Activated T-helper 1 cell treated with anti-CD3 and anti-CD28 coated beads, Interleukin-12 subunit alpha, Interleukin-12 subunit beta, Interleukin-2, Interleukin-4 antibody, amounts not matched to agents 30 ng/mL and 10 ng/mL and 1 ng/mL, durations not matched to agents 14 hours and 24 hours and 36 hours (primary cell): ENCODE measurements at regions of chr2 and their contacts with region 1.

Region 1: DNA sequence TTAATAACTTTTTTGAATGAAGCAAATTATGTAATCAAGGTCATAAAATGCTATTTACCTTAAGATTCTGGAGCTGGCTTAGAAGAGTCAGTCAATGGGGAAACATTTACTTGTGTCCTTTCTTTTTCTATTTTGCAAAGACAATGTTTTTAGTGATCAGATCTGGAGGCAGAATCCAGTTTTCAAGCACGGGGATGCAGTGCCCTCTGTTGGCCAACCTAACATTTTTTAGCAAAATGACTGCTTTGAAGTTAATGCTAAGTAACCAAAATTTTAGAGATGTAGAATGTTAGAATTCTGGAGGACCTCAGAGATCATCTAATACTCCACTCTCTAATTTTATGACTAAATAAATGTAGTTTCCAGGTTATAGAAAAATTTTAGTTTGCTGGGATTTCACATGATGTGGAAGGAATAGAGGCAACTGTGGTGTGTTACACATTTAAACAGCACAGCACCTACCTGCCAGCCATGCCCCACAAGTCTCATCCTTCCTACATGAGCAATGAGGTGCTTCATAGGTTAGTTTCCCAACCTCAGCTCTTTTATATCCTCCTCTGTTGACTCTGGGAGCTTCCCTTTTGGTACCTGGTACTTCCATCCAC is 23.6 kb upstream of the SLC9A4 start:
- DNase-seq: peak; percentile 54
- H3K4me3 Mint-ChIP-seq: no peak overlapping the region
- H3K27ac Mint-ChIP-seq: no peak overlapping the region
- H3K4me1 Mint-ChIP-seq: peaks cover 20% of the 10 kb centered on the region
- H3K27me3 Mint-ChIP-seq: no peaks in the 10 kb centered on the region

Region 2: DNA sequence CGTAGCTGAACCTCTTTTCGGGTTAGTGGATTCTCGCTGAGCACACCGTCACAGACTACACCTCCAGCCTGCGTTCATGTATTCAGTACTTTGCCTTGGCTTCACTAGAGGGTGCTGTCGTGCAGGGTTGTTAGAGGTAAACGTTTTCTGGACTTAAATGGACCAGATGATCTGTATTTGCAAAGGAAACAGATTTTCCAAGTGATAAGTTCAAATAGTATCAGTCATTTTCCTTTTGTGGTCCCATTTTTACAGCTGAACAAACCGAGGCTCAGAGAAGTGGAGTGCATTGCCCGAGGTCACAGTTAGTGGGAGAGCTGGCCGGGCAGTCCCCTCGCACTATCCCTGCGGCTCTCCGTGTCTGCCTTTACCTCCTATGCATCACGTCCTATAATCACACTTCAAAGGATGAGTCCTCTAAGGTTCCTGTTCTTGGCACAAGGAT is 626.1 kb before region 1 on chr2:
- intact Hi-C with region 1: loop called (anchors 5 kb)
- DNase-seq: peak; percentile 63
- H3K4me3 Mint-ChIP-seq: peak overlapping the region; percentile 32
- H3K27ac Mint-ChIP-seq: peak overlapping the region; percentile 30
- H3K4me1 Mint-ChIP-seq: peaks cover 75% of the 10 kb centered on the region
- H3K27me3 Mint-ChIP-seq: no peaks in the 10 kb centered on the region

Region 3: GRCh38 chr2:102187496-102188150 is 261.8 kb before region 1 on chr2:
- intact Hi-C with region 1: loop called (anchors 2 kb)
- DNase-seq: no peak
- H3K4me3 Mint-ChIP-seq: peak overlapping the region; percentile 73
- H3K27ac Mint-ChIP-seq: peak overlapping the region; percentile 63
- H3K4me1 Mint-ChIP-seq: peaks cover 17% of the 10 kb centered on the region
- H3K27me3 Mint-ChIP-seq: peaks cover 23% of the 10 kb centered on the region

Region 4: GRCh38 chr2:102235491-102235890 is 214.0 kb before region 1 on chr2:
- intact Hi-C with region 1: loop called (anchors 1 kb)
- DNase-seq: no peak
- H3K4me3 Mint-ChIP-seq: no peak overlapping the region
- H3K27ac Mint-ChIP-seq: no peak overlapping the region
- H3K4me1 Mint-ChIP-seq: peaks cover 53% of the 10 kb centered on the region
- H3K27me3 Mint-ChIP-seq: no peaks in the 10 kb centered on the region

Region 5: DNA sequence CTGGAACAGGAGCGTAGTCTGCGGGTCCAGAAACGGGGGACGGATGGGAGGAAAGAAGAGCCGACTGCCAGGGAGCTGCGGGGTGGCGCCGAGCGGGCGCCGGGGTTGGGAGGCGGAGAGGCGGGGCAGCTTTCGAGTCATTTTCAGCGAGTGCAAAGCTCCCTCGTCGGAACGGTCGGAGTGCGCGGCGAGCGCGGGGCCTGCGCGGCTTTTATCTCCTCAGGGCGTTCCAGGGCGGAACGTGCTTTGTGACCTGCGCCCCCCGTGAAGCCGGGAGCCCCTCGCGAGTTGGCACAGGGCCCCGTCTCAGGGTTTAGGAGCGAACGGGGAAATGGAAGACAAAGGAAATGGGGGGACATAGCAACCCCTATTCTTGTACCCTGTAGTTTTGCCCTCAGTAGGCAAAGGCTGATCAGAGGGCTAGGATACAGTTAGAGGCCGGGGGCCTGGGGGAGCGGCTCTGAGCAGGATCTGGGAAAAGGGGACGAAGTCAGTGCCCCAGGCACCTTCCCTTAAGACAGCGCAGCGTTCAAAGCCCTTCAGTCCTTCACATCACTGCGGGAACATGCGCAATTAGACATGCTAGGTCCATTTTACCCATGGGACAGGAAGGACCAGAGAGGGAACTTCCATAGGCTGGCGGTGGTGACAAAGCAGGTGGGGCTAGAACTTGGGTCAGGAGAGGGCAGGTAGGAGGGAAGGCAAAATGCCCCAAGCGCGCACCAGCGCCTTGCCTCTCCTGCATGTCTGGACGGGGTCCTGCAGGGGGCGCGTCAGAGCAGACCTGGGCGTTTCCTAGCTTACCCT is 198.2 kb before region 1 on chr2:
- intact Hi-C with region 1: loop called (anchors 1 kb)
- DNase-seq: peak; percentile 49
- H3K4me3 Mint-ChIP-seq: peak overlapping the region; percentile 72
- H3K27ac Mint-ChIP-seq: peak overlapping the region; percentile 71
- H3K4me1 Mint-ChIP-seq: peaks cover 44% of the 10 kb centered on the region
- H3K27me3 Mint-ChIP-seq: peaks cover 4% of the 10 kb centered on the region

Region 6: DNA sequence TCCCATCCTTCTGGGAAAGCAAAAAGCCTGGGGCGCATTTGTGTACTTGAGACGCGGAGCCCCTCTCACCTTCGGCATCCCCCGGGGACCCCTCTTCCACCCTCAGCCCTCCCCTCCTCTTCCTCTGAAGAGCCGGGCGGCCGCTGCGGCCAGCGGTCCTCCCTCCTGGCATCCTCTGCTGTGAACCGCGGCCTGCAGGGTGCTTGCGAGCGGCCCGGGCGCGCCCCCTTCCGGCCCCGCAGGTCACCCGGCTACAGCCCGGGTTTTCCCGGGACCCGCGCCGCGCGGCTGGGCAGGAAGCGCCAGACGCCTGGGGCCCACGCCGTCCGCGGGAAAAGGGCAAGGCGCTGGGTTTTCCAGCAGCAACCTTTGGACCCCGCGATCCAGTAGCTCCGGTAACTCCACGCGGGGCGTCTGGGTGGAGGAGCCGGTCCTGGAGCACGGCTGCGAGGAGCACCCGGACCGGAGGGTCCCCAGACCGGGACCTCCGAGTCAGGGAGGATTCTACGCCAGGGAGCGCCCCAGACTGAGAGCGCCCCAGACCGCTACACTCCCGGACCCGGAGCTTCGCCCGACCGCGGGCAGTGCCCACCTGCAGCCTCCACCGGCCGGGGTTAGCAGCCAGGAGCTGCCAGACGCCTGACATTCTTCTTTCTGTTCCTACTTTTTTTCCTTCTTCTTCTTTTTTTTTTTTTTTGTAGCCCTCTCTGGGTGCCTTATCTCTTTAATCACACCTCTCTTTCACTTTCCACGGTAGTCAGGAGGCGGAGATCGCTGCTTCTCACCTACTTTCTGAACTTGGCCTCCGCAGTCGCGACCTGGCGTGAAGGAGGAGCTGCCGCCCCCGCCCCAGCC is 93.7 kb before region 1 on chr2 and contains the start of gene IL18R1:
- intact Hi-C with region 1: loop called (anchors 1 kb)
- DNase-seq: peak; percentile 71
- H3K4me3 Mint-ChIP-seq: peak within 1 kb of the TSS; percentile 97
- H3K27ac Mint-ChIP-seq: peak within 1 kb of the TSS; percentile 96
- H3K4me1 Mint-ChIP-seq: peaks cover 47% of the 10 kb centered on the region
- H3K27me3 Mint-ChIP-seq: no peaks in the 10 kb centered on the region
- total RNA-seq, gene IL18R1: 57.8 and 61.3 TPM in 2 replicates